CD4-positive, alpha-beta memory T cell (primary cell): ENCODE measurements at regions of chr6 and their contacts with region 1.

Region 1: GRCh38 chr6:53484476-53485280 is 60.2 kb downstream of the GCLC start:
- DNase-seq: peak; percentile 64 to 71 (median 68)
- H3K4me3 ChIP-seq: no peak overlapping the region
- H3K4me3 Mint-ChIP-seq: no peak overlapping the region
- H3K27ac ChIP-seq: no peak overlapping the region
- H3K27ac Mint-ChIP-seq: no peak overlapping the region
- H3K4me1 ChIP-seq: no peaks in the 10 kb centered on the region
- H3K4me1 Mint-ChIP-seq: peaks cover 5 to 15% (median 8%) of the 10 kb centered on the region in 4 donors
- H3K27me3 ChIP-seq: peaks cover 4% of the 10 kb centered on the region
- H3K27me3 Mint-ChIP-seq: peaks cover 20 to 23% of the 10 kb centered on the region in 2 donors

Region 2: GRCh38 chr6:52839119-52840055 is 645.3 kb before region 1 on chr6:
- CTCF ChIA-PET with region 1: interaction called, 4 read pairs
- POLR2A ChIA-PET with region 1: no interaction called
- intact Hi-C with region 1: loop called (anchors 1 kb)
- DNase-seq: peak in 4 of 5 donors; percentile 29 to 46 (median 36)
- H3K4me3 ChIP-seq: no peak overlapping the region
- H3K4me3 Mint-ChIP-seq: no peak overlapping the region
- H3K27ac ChIP-seq: no peak overlapping the region
- H3K27ac Mint-ChIP-seq: no peak overlapping the region
- H3K4me1 ChIP-seq: no peaks in the 10 kb centered on the region
- H3K4me1 Mint-ChIP-seq: no peaks in the 10 kb centered on the region
- H3K27me3 ChIP-seq: peaks cover 4% of the 10 kb centered on the region
- H3K27me3 Mint-ChIP-seq: peaks cover 15 to 18% of the 10 kb centered on the region in 2 donors

Region 3: GRCh38 chr6:53103992-53104675 is 380.5 kb before region 1 on chr6:
- CTCF ChIA-PET with region 1: interaction called, 10 read pairs
- POLR2A ChIA-PET with region 1: no interaction called
- intact Hi-C with region 1: no loop called
- DNase-seq: no peak
- H3K4me3 ChIP-seq: no peak overlapping the region
- H3K4me3 Mint-ChIP-seq: no peak overlapping the region
- H3K27ac ChIP-seq: no peak overlapping the region
- H3K27ac Mint-ChIP-seq: peak overlapping the region in 1 of 7 donors; percentile 71
- H3K4me1 ChIP-seq: no peaks in the 10 kb centered on the region
- H3K4me1 Mint-ChIP-seq: no peaks in the 10 kb centered on the region
- H3K27me3 ChIP-seq: no peaks in the 10 kb centered on the region
- H3K27me3 Mint-ChIP-seq: no peaks in the 10 kb centered on the region

Region 4: GRCh38 chr6:53294095-53294494 is 190.6 kb before region 1 on chr6:
- CTCF ChIA-PET with region 1: no interaction called
- POLR2A ChIA-PET with region 1: no interaction called
- intact Hi-C with region 1: loop called (anchors 10 kb)
- DNase-seq: no peak
- H3K4me3 ChIP-seq: no peak overlapping the region
- H3K4me3 Mint-ChIP-seq: peak overlapping the region in 2 of 8 donors; percentile 6 to 34
- H3K27ac ChIP-seq: peak overlapping the region; percentile 27
- H3K27ac Mint-ChIP-seq: peak overlapping the region; percentile 53 to 94 (median 83)
- H3K4me1 ChIP-seq: peaks cover 97% of the 10 kb centered on the region
- H3K4me1 Mint-ChIP-seq: peaks cover 69 to 97% (median 83%) of the 10 kb centered on the region in 4 donors
- H3K27me3 ChIP-seq: no peaks in the 10 kb centered on the region
- H3K27me3 Mint-ChIP-seq: no peaks in the 10 kb centered on the region

Region 5: DNA sequence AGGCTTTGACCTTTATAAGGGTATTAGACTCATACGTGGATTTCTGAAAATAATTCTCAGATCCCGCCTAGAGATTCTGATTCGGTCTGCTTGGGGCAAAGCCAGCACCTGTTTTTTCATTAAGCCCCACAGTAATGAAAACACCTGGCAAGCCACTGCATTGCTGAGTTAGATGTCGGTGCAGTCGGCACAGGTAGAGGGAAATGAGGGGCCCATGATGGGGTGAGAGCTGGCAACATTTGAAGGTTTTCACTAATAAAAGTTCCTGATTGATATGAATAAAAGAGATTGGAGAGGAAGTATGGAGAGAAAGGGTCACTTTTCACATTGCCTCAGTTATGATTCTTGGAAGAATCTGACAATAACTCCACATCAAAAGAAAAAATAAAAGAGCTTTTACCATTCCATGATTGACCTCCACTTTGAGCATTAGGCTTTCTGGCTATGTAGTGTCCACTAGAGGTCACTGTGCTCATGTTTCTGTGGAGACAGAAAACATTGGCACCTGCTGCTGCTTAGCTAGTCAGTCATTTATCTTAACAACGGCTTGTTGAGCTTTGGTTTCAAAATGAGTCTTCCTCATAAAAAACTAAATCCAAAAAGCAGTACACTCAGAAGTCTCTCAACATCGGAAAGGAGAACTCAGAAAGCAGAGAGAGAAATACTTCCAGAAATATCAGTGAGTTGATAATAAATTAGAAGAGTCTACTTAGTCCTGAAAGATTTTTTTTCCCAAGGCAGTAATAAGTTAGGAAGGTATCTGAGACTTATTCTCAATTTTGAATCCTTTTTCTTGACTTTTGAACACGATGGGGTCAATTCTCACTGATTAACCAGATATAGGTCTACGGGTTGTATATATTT is 234.2 kb after region 1 on chr6:
- CTCF ChIA-PET with region 1: interaction called, 11 read pairs
- POLR2A ChIA-PET with region 1: no interaction called
- intact Hi-C with region 1: no loop called
- DNase-seq: peak in 4 of 5 donors; percentile 29 to 45 (median 32)
- H3K4me3 ChIP-seq: no peak overlapping the region
- H3K4me3 Mint-ChIP-seq: peak overlapping the region in 1 of 8 donors; percentile 49
- H3K27ac ChIP-seq: no peak overlapping the region
- H3K27ac Mint-ChIP-seq: no peak overlapping the region
- H3K4me1 ChIP-seq: no peaks in the 10 kb centered on the region
- H3K4me1 Mint-ChIP-seq: peaks cover 0 to 4% (median 2%) of the 10 kb centered on the region in 4 donors
- H3K27me3 ChIP-seq: no peaks in the 10 kb centered on the region
- H3K27me3 Mint-ChIP-seq: peaks cover 10 to 20% of the 10 kb centered on the region in 2 donors